K562 (cell line): ENCODE measurements at regions of chr21 and their contacts with region 1.

Region 1: DNA sequence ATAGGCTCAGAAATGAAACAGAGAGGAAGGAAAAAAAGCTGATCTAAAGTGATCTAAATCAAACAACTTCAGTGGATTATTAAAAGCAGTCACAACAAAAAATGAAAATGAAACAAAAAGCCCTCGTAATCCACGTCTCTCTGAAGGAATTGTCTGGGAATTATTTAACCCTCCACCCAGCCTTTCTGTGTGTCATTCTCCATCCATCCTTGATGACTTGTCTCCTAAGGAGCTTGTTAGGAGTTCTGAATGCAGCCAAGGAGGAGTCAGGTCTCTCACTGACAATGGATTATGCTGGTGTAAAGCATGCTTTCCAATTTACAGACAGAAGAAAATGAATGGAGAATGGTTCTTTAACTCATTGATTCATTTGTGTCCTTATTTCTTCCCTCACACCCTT is 359.3 kb upstream of the RUNX1 start:
- DNase-seq: no peak
- ATAC-seq: no peak
- H3K4me3 ChIP-seq: no peak overlapping the region
- H3K27ac ChIP-seq: no peak overlapping the region
- H3K4me1 ChIP-seq: peaks cover 0 to 3% of the 10 kb centered on the region in 2 experiments; a peak in 3 of 5 replicates
- H3K27me3 ChIP-seq: no peaks in the 10 kb centered on the region; a peak in 1 of 5 replicates
- CTCF ChIP-seq: no peak
- EP300 ChIP-seq: no peak
- POLR2A ChIP-seq: no peak
- RAD21 ChIP-seq: no peak

Region 2: GRCh38 chr21:34952701-34953100 is 455.7 kb before region 1 on chr21:
- CTCF ChIA-PET with region 1: no interaction called
- POLR2A ChIA-PET with region 1: no interaction called
- in situ Hi-C with region 1: no loop called
- intact Hi-C with region 1: no loop called
- DNase-seq: no peak
- ATAC-seq: no peak
- H3K4me3 ChIP-seq: no peak overlapping the region
- H3K27ac ChIP-seq: no peak overlapping the region
- H3K4me1 ChIP-seq: peaks cover 12 to 33% of the 10 kb centered on the region in 2 experiments
- H3K27me3 ChIP-seq: no peaks in the 10 kb centered on the region
- CTCF ChIP-seq: no peak
- EP300 ChIP-seq: no peak
- POLR2A ChIP-seq: no peak
- RAD21 ChIP-seq: no peak

Region 3: DNA sequence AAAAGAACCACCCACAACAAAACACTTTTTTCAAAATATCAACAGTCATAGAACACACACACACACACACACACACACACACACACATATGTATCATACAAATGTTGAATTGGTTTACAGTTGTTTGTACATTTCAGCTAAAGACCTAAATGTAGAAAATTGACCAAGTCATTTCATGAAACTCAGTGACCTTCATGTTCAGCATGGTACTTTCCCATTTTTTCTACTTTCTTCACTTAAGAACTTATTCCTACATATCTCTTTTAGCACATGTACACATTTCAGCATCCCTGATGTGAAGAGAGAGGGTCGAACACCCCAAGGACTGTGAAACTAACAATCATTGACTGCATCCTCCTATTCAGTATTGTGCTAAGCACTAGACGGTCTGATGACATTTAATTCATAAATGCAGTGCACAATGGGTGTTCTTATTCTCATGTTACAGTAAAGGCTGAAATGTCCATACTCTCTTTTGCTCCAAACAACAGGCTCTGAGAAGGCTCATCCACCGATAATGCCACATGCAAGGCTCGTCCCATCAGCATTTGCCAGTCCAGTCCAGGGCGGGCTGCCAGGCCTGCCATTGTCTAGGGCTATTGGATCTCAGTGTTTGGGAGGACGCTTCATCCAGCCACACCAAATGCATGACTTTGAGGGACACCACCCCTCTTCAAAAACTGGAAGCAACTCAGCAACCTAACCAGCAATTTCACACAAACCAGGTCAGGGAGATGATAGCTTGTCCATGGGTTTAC is 209.2 kb before region 1 on chr21:
- CTCF ChIA-PET with region 1: no interaction called
- POLR2A ChIA-PET with region 1: no interaction called
- in situ Hi-C with region 1: no loop called
- intact Hi-C with region 1: no loop called
- DNase-seq: no peak
- ATAC-seq: no peak
- H3K4me3 ChIP-seq: no peak overlapping the region
- H3K27ac ChIP-seq: no peak overlapping the region
- H3K4me1 ChIP-seq: peaks cover 4 to 30% of the 10 kb centered on the region in 2 experiments; a peak in 4 of 5 replicates
- H3K27me3 ChIP-seq: no peaks in the 10 kb centered on the region
- CTCF ChIP-seq: no peak
- EP300 ChIP-seq: no peak
- POLR2A ChIP-seq: no peak
- RAD21 ChIP-seq: no peak

Region 4: GRCh38 chr21:35366394-35367080 is 41.9 kb before region 1 on chr21:
- CTCF ChIA-PET with region 1: no interaction called
- POLR2A ChIA-PET with region 1: no interaction called
- in situ Hi-C with region 1: no loop called
- intact Hi-C with region 1: no loop called
- DNase-seq: no peak
- ATAC-seq: no peak
- H3K4me3 ChIP-seq: no peak overlapping the region
- H3K27ac ChIP-seq: no peak overlapping the region
- H3K4me1 ChIP-seq: no peaks in the 10 kb centered on the region
- H3K27me3 ChIP-seq: no peaks in the 10 kb centered on the region
- CTCF ChIP-seq: no peak
- EP300 ChIP-seq: no peak
- POLR2A ChIP-seq: no peak
- RAD21 ChIP-seq: no peak

Region 5: GRCh38 chr21:35461700-35462099 is 53.3 kb after region 1 on chr21:
- CTCF ChIA-PET with region 1: no interaction called
- POLR2A ChIA-PET with region 1: no interaction called
- in situ Hi-C with region 1: no loop called
- intact Hi-C with region 1: loop called (anchors 1 kb)
- DNase-seq: peak in 2 of 4 experiments; percentile 33 to 47
- ATAC-seq: peak; percentile 71
- H3K4me3 ChIP-seq: no peak overlapping the region
- H3K27ac ChIP-seq: peak overlapping the region; percentile 48; the same call in 1 of the 3 replicates
- H3K4me1 ChIP-seq: peaks cover 0 to 6% of the 10 kb centered on the region in 2 experiments; a peak in 2 of 5 replicates
- H3K27me3 ChIP-seq: no peaks in the 10 kb centered on the region
- CTCF ChIP-seq: no peak
- EP300 ChIP-seq: peak; percentile 40; the same call in 1 of the 2 replicates
- POLR2A ChIP-seq: no peak
- RAD21 ChIP-seq: no peak